ENCODE measurements at regions of chr2 and their contacts with region 1.

Region 1: DNA sequence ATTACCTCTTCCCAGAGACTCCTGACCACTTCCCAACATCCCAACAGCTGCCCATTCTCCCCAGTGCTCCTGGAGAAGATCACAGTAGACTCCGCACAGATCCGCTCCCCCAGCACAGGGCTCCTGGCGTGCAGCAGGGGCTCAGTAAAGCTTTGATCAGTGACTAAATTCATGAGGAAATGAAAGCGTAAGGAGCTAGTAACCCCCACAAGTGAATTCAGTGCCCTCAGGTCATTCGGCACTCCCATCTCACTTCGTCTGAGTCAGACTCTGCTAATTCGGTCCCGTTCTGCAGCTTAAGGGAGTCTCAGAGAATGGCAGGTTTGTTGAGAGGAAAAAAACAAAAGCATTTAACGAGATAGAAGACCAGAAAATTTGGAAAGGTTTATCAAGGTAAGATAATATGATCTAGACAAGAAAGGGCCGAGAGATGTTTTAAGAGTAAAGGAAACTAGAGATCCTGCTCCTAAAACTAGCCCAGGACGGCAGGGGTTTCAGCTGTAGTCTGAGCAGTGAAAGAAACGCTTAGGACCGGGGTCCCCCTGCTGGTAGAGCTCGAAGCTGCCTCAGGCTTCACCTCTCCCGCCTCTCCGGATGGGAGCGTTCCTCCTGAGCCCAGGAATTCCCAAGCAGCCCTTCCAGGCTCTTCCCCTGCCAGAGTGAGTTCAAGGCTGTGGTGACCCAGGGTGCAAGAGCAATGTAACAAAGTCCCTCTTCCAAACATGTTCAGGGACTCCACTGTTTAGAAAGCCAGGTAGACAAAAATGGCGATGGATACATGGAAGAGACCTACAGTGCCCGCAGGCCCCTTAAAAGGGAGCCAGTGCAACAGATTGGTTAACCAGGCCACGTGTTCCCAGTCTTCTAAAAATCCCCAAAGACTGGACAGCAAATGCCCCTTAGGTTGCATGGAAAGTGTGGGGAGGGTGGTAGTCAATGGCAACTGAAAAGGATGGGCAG is 127.3 kb downstream of the DNER start:
- DNase-seq: peak; percentile 10
- H3K4me3 ChIP-seq: no peak overlapping the region
- H3K27me3 ChIP-seq: peaks cover 3% of the 10 kb centered on the region; the same call in 1 of the 2 replicates
- CTCF ChIP-seq: peak; percentile 94

Region 2: GRCh38 chr2:228689053-228689452 is 898.0 kb before region 1 on chr2:
- CTCF ChIA-PET with region 1: interaction called, 10 read pairs
- POLR2A ChIA-PET with region 1: no interaction called
- DNase-seq: no peak
- H3K4me3 ChIP-seq: no peak overlapping the region
- H3K27me3 ChIP-seq: no peaks in the 10 kb centered on the region; the same call in 1 of the 2 replicates
- CTCF ChIP-seq: no peak; the same call in 1 of the 2 replicates

Region 3: DNA sequence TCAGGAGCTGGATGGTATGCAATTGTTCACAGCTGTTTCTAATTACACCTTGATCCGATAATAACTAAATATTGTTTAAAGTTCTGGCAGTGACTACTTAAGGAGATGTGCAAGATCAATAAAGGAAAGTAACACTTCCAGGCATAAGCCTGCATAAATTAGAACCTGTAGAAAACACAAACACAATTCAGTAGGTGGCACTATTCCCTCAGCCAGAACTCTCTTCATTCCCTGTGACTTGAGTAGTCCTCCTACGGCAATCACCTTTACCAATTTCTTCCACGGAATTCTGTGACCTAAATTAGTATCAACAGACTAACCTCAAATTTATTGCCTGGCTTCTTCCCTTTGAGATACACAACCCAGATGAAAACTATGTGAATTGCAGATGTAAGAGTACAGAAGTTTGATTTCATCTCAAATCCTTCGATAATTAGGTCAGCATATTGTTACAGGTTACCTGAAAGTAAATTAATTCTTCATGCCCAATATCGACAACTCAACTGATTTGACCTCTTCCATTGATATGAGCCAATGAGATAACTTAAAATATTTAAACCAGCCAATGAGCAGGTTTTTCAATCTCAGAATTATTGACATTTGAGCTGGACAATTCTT is 453.8 kb before region 1 on chr2:
- CTCF ChIA-PET with region 1: interaction called, 26 read pairs
- POLR2A ChIA-PET with region 1: no interaction called
- DNase-seq: no peak
- H3K4me3 ChIP-seq: no peak overlapping the region
- H3K27me3 ChIP-seq: no peaks in the 10 kb centered on the region
- CTCF ChIP-seq: peak; percentile 55

Region 4: DNA sequence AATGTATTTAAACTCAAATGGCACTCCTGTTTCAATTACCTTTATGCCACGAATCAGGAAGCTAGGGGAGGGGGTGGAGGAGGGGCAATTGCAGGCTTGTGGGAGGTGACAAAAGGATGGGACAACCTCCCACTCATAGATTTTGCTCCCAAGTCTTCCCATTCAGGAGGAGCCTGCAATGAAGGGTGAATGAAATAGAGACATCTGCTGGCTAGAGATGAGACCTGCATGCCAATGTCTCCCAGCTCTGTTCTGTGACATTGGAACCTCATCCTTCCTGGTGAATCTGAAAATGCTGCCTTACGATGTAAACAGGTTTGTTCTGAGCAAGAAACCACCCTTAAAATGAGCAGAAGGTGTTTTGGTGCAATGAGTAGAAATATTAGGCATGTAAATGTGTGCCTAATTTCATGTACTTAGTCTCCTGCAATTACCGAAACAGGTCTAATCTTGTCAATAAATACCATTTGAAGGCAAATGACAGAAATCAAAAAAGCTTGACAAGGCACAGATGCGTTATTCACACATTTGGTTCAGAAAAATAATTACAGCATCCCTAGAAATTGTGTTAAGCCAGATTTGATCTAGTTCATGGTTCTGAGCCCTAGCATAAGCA is 313.2 kb before region 1 on chr2:
- CTCF ChIA-PET with region 1: interaction called, 13 read pairs
- POLR2A ChIA-PET with region 1: no interaction called
- DNase-seq: no peak
- H3K4me3 ChIP-seq: peak overlapping the region; percentile 23
- H3K27me3 ChIP-seq: no peaks in the 10 kb centered on the region
- CTCF ChIP-seq: peak; percentile 87

Region 5: GRCh38 chr2:229431327-229431954 is 155.6 kb before region 1 on chr2:
- CTCF ChIA-PET with region 1: interaction called, 68 read pairs
- POLR2A ChIA-PET with region 1: interaction called, 3 read pairs
- DNase-seq: no peak
- H3K4me3 ChIP-seq: no peak overlapping the region
- H3K27me3 ChIP-seq: no peaks in the 10 kb centered on the region
- CTCF ChIP-seq: peak; percentile 61

Measured in BJ (cell line).